Testis (tissue), 5 donors: ENCODE measurements at regions of chr15 and their contacts with region 1.

Region 1: DNA sequence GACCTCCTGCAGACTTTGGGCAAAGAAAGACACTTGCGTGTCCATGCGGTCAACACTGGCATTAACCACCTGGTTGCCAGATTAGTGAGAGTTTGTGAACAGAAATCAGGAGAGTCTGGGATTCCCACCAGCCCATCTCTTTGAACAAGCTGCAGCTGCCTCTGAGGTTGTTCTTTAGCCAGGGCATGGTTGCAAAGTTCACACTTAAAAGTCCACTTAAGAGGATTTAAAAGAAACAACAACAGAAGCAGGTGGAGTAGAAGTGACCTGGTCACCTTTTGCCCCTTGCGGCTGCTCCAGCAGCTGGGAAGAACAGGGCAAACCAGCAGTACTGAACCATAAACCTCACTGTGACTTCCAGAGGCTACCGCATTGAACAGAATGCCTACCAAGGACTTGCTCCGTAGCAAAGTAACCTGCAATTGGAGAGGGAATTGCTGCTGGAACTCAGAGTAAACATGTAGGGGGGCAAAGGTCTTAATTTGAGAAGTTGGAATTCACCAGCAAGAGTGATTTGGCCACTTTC is 97.4 kb downstream of the FOXB1 start:
- DNase-seq: no peak
- H3K4me3 ChIP-seq: no peak overlapping the region
- H3K27ac ChIP-seq: no peak overlapping the region
- H3K4me1 ChIP-seq: no peaks in the 10 kb centered on the region
- H3K27me3 ChIP-seq: no peaks in the 10 kb centered on the region
- CTCF ChIP-seq: no peak
- POLR2A ChIP-seq: no peak

Region 2: DNA sequence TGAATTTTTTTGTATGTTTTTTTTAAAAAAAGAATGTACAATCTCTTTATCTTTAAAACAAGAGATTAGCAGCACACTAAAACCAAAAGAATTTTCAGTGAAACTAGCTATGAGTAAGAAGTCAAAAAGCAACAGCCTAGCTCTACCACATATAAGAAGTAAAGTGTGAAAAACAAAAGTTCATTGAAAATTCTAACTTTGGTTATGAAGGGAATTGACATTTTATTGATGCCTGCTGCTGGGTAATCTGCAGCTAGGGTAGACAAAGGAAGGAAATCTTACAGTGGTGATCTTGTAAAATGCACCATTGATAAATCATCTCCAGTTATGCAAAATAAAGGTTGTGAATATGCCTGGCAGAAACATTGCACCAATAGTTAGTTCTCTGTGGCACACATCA is 135.2 kb before region 1 on chr15:
- intact Hi-C with region 1: no loop called
- DNase-seq: no peak
- H3K4me3 ChIP-seq: no peak overlapping the region
- H3K27ac ChIP-seq: no peak overlapping the region
- H3K4me1 ChIP-seq: no peaks in the 10 kb centered on the region
- H3K27me3 ChIP-seq: no peaks in the 10 kb centered on the region
- CTCF ChIP-seq: no peak
- POLR2A ChIP-seq: no peak

Region 3: GRCh38 chr15:60044636-60045270 is 56.7 kb before region 1 on chr15:
- intact Hi-C with region 1: loop called (anchors 10 kb)
- DNase-seq: no peak
- H3K4me3 ChIP-seq: no peak overlapping the region
- H3K27ac ChIP-seq: no peak overlapping the region
- H3K4me1 ChIP-seq: no peaks in the 10 kb centered on the region
- H3K27me3 ChIP-seq: no peaks in the 10 kb centered on the region
- CTCF ChIP-seq: no peak
- POLR2A ChIP-seq: no peak